H1 (cell line): ENCODE measurements at regions of chr6 and their contacts with region 1.

Region 1: GRCh38 chr6:143510991-143511891 is at the start of gene FUCA2:
- DNase-seq: peak; percentile 70 to 86
- H3K4me3 ChIP-seq: peak within 1 kb of the TSS; percentile 49 to 80 (median 72)
- H3K27ac ChIP-seq: peak within 1 kb of the TSS; percentile 77
- H3K4me1 ChIP-seq: peaks cover 6 to 12% (median 10%) of the 10 kb centered on the region in 4 experiments
- H3K27me3 ChIP-seq: peaks cover 0 to 9% (median 5%) of the 10 kb centered on the region in 4 experiments; a peak in 3 of 7 replicates
- CTCF ChIP-seq: no peak
- EP300 ChIP-seq: 0 out of 3 replicates have a peak, but pooled peaks of 1 of the 2 experiments have one; percentile 40
- POLR2A ChIP-seq: peak; percentile 91 to 98
- RAD21 ChIP-seq: peak in 1 of 2 experiments; percentile 4; a peak in 2 of 4 replicates
- total RNA-seq, gene FUCA2: 47.2 and 47.4 TPM in 2 replicates

Region 2: GRCh38 chr6:143419526-143419925 is 91.7 kb before region 1 on chr6:
- CTCF ChIA-PET with region 1: no interaction called
- POLR2A ChIA-PET with region 1: no interaction called
- DNase-seq: no peak
- H3K4me3 ChIP-seq: no peak overlapping the region
- H3K27ac ChIP-seq: no peak overlapping the region
- H3K4me1 ChIP-seq: no peaks in the 10 kb centered on the region
- H3K27me3 ChIP-seq: no peaks in the 10 kb centered on the region
- CTCF ChIP-seq: no peak
- EP300 ChIP-seq: no peak
- POLR2A ChIP-seq: no peak
- RAD21 ChIP-seq: no peak

Region 3: GRCh38 chr6:143525356-143525755 is 14.1 kb after region 1 on chr6:
- CTCF ChIA-PET with region 1: interaction called, 20 read pairs
- POLR2A ChIA-PET with region 1: interaction called, 10 read pairs
- DNase-seq: no peak
- H3K4me3 ChIP-seq: no peak overlapping the region
- H3K27ac ChIP-seq: no peak overlapping the region
- H3K4me1 ChIP-seq: no peaks in the 10 kb centered on the region
- H3K27me3 ChIP-seq: peaks cover 0 to 2% (median 0%) of the 10 kb centered on the region in 4 experiments; a peak in 1 of 7 replicates
- CTCF ChIP-seq: no peak
- EP300 ChIP-seq: no peak
- POLR2A ChIP-seq: no peak
- RAD21 ChIP-seq: no peak

Region 4: GRCh38 chr6:143536865-143537691 is 25.8 kb after region 1 on chr6:
- CTCF ChIA-PET with region 1: interaction called, 77 read pairs
- POLR2A ChIA-PET with region 1: interaction called, 24 read pairs
- DNase-seq: peak in 1 of 2 experiments; percentile 80
- H3K4me3 ChIP-seq: peak overlapping the region; percentile 39 to 71 (median 66)
- H3K27ac ChIP-seq: no peak overlapping the region
- H3K4me1 ChIP-seq: peaks cover 6 to 10% (median 8%) of the 10 kb centered on the region in 4 experiments
- H3K27me3 ChIP-seq: peaks cover 2 to 30% (median 22%) of the 10 kb centered on the region in 4 experiments
- CTCF ChIP-seq: peak; percentile 42 to 70 (median 69)
- EP300 ChIP-seq: no peak
- POLR2A ChIP-seq: peak in 1 of 2 experiments; percentile 37; a peak in 1 of 3 replicates
- RAD21 ChIP-seq: peak; percentile 26 to 29; a peak in 2 of 4 replicates

Region 5: DNA sequence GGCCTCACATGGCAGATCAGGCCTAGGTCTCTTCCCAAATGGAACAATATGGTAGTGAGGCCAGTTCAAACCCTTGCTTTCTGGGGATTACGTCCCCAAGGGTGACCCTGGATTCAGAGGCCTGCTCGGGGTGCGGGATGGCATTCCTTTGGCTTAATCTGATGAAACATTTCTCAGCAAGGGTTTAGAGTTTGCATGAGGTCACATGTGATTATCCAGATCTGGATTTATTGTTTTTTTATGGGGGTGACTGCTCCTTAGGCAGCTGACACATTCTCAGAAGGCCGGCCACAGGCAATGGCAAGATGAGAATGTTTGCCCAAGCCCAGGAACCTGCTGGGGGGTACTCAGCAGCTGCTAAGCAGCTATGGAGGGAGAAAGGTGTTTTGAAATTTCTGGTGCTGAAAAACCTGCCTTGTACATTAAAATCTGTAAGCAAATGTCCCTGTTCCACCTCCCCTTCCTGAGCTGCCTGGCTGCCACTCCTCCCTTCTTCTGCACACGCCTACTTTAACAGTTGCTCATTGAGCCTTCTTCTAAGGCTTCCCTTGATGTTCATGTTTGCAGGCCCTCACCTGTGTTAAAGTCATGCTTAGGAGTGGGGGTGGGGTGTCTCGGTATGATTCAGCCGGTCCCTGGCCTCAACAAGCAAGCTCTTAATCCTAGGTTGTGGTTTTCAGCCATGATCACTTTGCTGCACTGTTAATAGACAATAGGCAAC is 38.1 kb after region 1 on chr6:
- CTCF ChIA-PET with region 1: interaction called, 15 read pairs
- POLR2A ChIA-PET with region 1: no interaction called
- DNase-seq: no peak
- H3K4me3 ChIP-seq: no peak overlapping the region
- H3K27ac ChIP-seq: no peak overlapping the region
- H3K4me1 ChIP-seq: no peaks in the 10 kb centered on the region
- H3K27me3 ChIP-seq: no peaks in the 10 kb centered on the region
- CTCF ChIP-seq: no peak
- EP300 ChIP-seq: no peak
- POLR2A ChIP-seq: no peak
- RAD21 ChIP-seq: no peak

Region 6: GRCh38 chr6:143569040-143569439 is 57.8 kb after region 1 on chr6:
- CTCF ChIA-PET with region 1: interaction called, 14 read pairs
- POLR2A ChIA-PET with region 1: no interaction called
- DNase-seq: no peak
- H3K4me3 ChIP-seq: no peak overlapping the region
- H3K27ac ChIP-seq: no peak overlapping the region
- H3K4me1 ChIP-seq: peaks cover 0 to 4% (median 0%) of the 10 kb centered on the region in 4 experiments; a peak in 1 of 7 replicates
- H3K27me3 ChIP-seq: no peaks in the 10 kb centered on the region
- CTCF ChIP-seq: no peak
- EP300 ChIP-seq: no peak
- POLR2A ChIP-seq: no peak
- RAD21 ChIP-seq: no peak

Region 7: GRCh38 chr6:143647191-143647590 is 135.9 kb after region 1 on chr6:
- CTCF ChIA-PET with region 1: no interaction called
- POLR2A ChIA-PET with region 1: no interaction called
- DNase-seq: no peak
- H3K4me3 ChIP-seq: no peak overlapping the region
- H3K27ac ChIP-seq: no peak overlapping the region
- H3K4me1 ChIP-seq: peaks cover 0 to 3% (median 2%) of the 10 kb centered on the region in 4 experiments; a peak in 3 of 7 replicates
- H3K27me3 ChIP-seq: no peaks in the 10 kb centered on the region
- CTCF ChIP-seq: no peak
- EP300 ChIP-seq: no peak
- POLR2A ChIP-seq: no peak
- RAD21 ChIP-seq: no peak